Endothelial cell of umbilical vein (primary cell): ENCODE measurements at regions of chr2 and their contacts with region 1.

Region 1: GRCh38 chr2:99489761-99490622 is at the start of gene REV1:
- DNase-seq: peak; percentile 95
- H3K4me3 ChIP-seq: peak within 1 kb of the TSS; percentile 85 to 96 (median 90)
- H3K27ac ChIP-seq: peak within 1 kb of the TSS; percentile 94
- H3K4me1 ChIP-seq: peaks cover 27% of the 10 kb centered on the region
- H3K27me3 ChIP-seq: peaks cover 3 to 6% of the 10 kb centered on the region in 2 experiments
- CTCF ChIP-seq: peak; percentile 45 to 60
- POLR2A ChIP-seq: peak; percentile 76
- total RNA-seq, gene REV1: 40.8 and 50.3 TPM in 2 replicates

Region 2: GRCh38 chr2:99086385-99086784 is 403.6 kb before region 1 on chr2:
- CTCF ChIA-PET with region 1: no interaction called
- POLR2A ChIA-PET with region 1: no interaction called
- dilution Hi-C with region 1: no loop called
- intact Hi-C with region 1: loop called (anchors 1 kb)
- DNase-seq: no peak
- H3K4me3 ChIP-seq: no peak overlapping the region
- H3K27ac ChIP-seq: no peak overlapping the region
- H3K4me1 ChIP-seq: no peaks in the 10 kb centered on the region
- H3K27me3 ChIP-seq: peaks cover 9 to 14% of the 10 kb centered on the region in 2 experiments
- CTCF ChIP-seq: no peak
- POLR2A ChIP-seq: no peak

Region 3: GRCh38 chr2:99205491-99205890 is 284.5 kb before region 1 on chr2:
- CTCF ChIA-PET with region 1: no interaction called
- POLR2A ChIA-PET with region 1: no interaction called
- dilution Hi-C with region 1: no loop called
- intact Hi-C with region 1: no loop called
- DNase-seq: no peak
- H3K4me3 ChIP-seq: no peak overlapping the region
- H3K27ac ChIP-seq: no peak overlapping the region
- H3K4me1 ChIP-seq: no peaks in the 10 kb centered on the region
- H3K27me3 ChIP-seq: no peaks in the 10 kb centered on the region
- CTCF ChIP-seq: no peak
- POLR2A ChIP-seq: no peak

Region 4: GRCh38 chr2:99337113-99338028 is 152.6 kb before region 1 on chr2 and contains the start of gene EIF5B:
- CTCF ChIA-PET with region 1: interaction called, 41 read pairs
- POLR2A ChIA-PET with region 1: interaction called, 5 read pairs
- dilution Hi-C with region 1: no loop called
- intact Hi-C with region 1: loop called (anchors 1 kb)
- DNase-seq: peak; percentile 98
- H3K4me3 ChIP-seq: peak within 1 kb of the TSS; percentile 89 to 96 (median 91)
- H3K27ac ChIP-seq: peak within 1 kb of the TSS; percentile 68
- H3K4me1 ChIP-seq: peaks cover 20% of the 10 kb centered on the region
- H3K27me3 ChIP-seq: no peaks in the 10 kb centered on the region
- CTCF ChIP-seq: peak; percentile 57 to 75
- POLR2A ChIP-seq: peak; percentile 89
- total RNA-seq, gene EIF5B: 53.5 and 54.5 TPM in 2 replicates

Region 5: DNA sequence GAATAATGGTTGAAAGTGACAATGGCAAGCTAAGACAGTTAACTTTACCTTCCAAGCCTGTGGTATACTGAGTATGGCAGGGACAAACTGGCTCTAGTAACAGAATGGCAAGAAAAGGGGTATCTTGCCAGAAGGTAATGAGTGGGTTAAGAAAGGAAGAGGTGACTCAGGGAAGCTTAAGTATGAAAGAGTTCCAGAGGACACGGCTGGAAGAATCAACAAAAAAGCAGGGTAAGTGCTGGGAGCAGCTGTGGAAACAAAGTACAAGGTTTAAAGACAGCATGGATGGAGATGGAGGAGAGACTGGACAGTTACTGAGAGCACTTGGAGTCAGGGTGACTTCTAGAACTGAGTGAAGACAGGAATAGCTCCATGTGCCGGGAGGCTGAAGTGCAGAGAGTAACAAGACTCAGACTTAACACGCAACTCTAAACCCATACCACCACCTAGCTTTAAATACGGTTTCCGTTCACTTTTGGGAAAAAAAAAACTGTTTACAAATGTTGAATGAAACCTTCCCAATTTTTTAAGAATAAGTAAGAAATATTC is 69.2 kb before region 1 on chr2:
- CTCF ChIA-PET with region 1: interaction called, 3 read pairs
- POLR2A ChIA-PET with region 1: no interaction called
- dilution Hi-C with region 1: no loop called
- intact Hi-C with region 1: loop called (anchors 5 kb)
- DNase-seq: peak; percentile 48
- H3K4me3 ChIP-seq: no peak overlapping the region
- H3K27ac ChIP-seq: peak overlapping the region; percentile 3
- H3K4me1 ChIP-seq: peaks cover 16% of the 10 kb centered on the region
- H3K27me3 ChIP-seq: no peaks in the 10 kb centered on the region
- CTCF ChIP-seq: no peak
- POLR2A ChIP-seq: no peak